Activated CD4-positive, alpha-beta memory T cell treated with anti-CD3 and anti-CD28 coated beads, Interleukin-2, amount 10 ng/mL, durations not matched to agents 7 days and 5 days (primary cell): ENCODE measurements at regions of chr17 and their contacts with region 1.

Region 1: DNA sequence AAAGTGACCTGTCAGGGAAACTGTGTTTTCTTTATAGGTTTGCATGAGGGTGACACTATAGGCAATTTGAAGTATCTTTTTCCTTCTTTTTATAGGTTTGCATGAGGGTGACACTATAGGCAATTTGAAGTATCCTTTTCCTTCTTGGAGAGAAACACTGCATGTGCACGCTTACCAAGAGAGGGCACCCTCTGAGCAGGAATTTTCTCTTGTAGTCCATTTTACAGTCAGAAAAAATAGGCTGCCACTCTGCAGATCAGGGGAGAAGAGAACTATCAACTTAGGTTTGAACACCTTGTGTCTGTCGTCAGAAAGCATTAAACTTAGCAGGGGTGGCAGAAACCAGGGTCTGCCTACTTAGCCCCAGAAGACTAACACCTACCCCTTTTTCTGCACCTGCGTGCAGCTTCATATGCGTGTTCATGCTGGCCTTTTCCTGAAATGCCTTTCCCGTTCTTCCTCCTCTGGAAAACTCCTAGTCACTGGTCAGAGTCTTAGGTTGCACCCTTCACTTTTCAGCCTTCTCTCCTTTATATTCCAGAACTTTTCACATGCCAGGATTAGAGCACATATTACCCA is 16.4 kb upstream of the SMIM36 start:
- DNase-seq: no peak
- H3K4me3 Mint-ChIP-seq: no peak overlapping the region
- H3K27ac Mint-ChIP-seq: no peak overlapping the region
- H3K4me1 Mint-ChIP-seq: peaks cover 15% of the 10 kb centered on the region
- H3K27me3 Mint-ChIP-seq: peaks cover 20% of the 10 kb centered on the region

Region 2: GRCh38 chr17:55157136-55157535 is 370.5 kb before region 1 on chr17:
- CTCF ChIA-PET with region 1: no interaction called
- POLR2A ChIA-PET with region 1: no interaction called
- DNase-seq: no peak
- H3K4me3 Mint-ChIP-seq: no peak overlapping the region
- H3K27ac Mint-ChIP-seq: no peak overlapping the region
- H3K4me1 Mint-ChIP-seq: peaks cover 4% of the 10 kb centered on the region
- H3K27me3 Mint-ChIP-seq: no peaks in the 10 kb centered on the region

Region 3: GRCh38 chr17:55190748-55191147 is 336.9 kb before region 1 on chr17:
- CTCF ChIA-PET with region 1: no interaction called
- POLR2A ChIA-PET with region 1: no interaction called
- DNase-seq: no peak
- H3K4me3 Mint-ChIP-seq: no peak overlapping the region
- H3K27ac Mint-ChIP-seq: no peak overlapping the region
- H3K4me1 Mint-ChIP-seq: no peaks in the 10 kb centered on the region
- H3K27me3 Mint-ChIP-seq: peaks cover 7% of the 10 kb centered on the region

Region 4: DNA sequence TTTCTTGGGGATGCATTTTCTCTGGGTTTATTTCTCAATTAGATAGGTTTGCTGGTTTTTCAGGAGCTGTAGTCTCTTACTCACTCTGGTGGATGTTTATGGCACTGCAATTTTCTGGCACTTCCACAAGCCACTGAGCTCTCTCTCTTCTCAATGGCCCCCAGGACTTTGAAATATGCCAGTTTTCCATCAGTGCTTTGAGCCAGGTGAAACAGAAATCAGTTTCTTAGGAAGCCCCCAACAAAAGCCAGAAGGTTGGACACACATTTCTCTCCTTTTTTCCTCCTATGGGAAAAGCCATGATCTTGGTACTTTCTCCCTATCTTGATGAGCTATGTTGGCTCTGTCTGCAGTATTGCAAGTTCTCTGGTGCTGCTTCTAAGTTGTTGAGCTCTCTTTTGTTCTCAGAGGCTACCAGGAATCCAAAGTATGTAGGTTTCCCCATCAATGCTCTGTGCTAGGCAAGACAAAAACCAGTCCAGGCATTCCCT is 74.3 kb after region 1 on chr17:
- CTCF ChIA-PET with region 1: interaction called, 40 read pairs
- POLR2A ChIA-PET with region 1: no interaction called
- DNase-seq: no peak
- H3K4me3 Mint-ChIP-seq: no peak overlapping the region
- H3K27ac Mint-ChIP-seq: no peak overlapping the region
- H3K4me1 Mint-ChIP-seq: no peaks in the 10 kb centered on the region
- H3K27me3 Mint-ChIP-seq: peaks cover 30% of the 10 kb centered on the region

Region 5: GRCh38 chr17:55641676-55642081 is 114.0 kb after region 1 on chr17:
- CTCF ChIA-PET with region 1: interaction called, 14 read pairs
- POLR2A ChIA-PET with region 1: interaction called, 3 read pairs
- DNase-seq: peak; percentile 41
- H3K4me3 Mint-ChIP-seq: no peak overlapping the region
- H3K27ac Mint-ChIP-seq: no peak overlapping the region
- H3K4me1 Mint-ChIP-seq: no peaks in the 10 kb centered on the region
- H3K27me3 Mint-ChIP-seq: peaks cover 19% of the 10 kb centered on the region

Region 6: DNA sequence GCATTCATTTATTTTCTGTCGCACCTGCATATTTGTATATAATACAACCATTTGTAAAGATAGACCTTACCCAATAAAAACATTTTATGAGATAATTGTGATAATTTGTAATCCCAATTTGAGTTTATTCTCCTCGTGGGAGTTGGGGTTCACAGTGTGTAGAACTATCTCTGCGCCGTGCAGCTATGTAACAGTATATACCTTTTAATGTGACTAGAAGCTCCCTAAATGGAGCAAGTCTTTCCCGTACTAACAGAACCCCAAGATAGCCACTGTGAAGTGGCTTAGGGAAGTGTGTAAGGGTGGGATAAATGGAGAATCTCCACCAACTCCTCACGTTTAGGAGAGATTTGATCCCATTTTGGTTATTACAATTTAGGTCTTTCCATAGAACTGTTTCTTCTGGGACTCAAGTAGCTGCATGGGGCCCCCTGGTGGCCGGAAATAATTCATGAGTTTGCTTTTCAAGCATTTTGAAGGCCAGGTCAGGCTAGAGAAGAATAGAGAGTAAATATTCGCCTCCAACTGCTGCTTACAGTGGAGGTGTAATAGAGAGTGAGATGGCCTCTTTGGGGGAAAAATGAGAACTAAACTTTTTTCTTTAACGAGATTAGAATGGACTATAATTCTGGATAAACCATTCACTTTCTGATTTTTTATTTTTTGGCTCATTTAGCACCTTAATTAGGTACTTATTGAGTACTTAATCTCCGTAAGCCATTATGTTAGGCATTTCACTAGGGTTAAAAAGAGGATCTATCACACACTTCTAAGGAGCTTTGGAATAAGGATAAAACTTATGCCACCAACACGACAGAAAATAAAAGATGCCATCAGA is 190.5 kb after region 1 on chr17:
- CTCF ChIA-PET with region 1: interaction called, 32 read pairs
- POLR2A ChIA-PET with region 1: interaction called, 3 read pairs
- DNase-seq: peak; percentile 65
- H3K4me3 Mint-ChIP-seq: no peak overlapping the region
- H3K27ac Mint-ChIP-seq: no peak overlapping the region
- H3K4me1 Mint-ChIP-seq: no peaks in the 10 kb centered on the region
- H3K27me3 Mint-ChIP-seq: peaks cover 17% of the 10 kb centered on the region

Region 7: GRCh38 chr17:55735731-55736405 is 208.2 kb after region 1 on chr17:
- CTCF ChIA-PET with region 1: interaction called, 14 read pairs
- POLR2A ChIA-PET with region 1: no interaction called
- DNase-seq: peak; percentile 32
- H3K4me3 Mint-ChIP-seq: no peak overlapping the region
- H3K27ac Mint-ChIP-seq: no peak overlapping the region
- H3K4me1 Mint-ChIP-seq: peaks cover 15% of the 10 kb centered on the region
- H3K27me3 Mint-ChIP-seq: peaks cover 31% of the 10 kb centered on the region

Region 8: GRCh38 chr17:55770148-55770870 is 242.7 kb after region 1 on chr17:
- CTCF ChIA-PET with region 1: interaction called, 14 read pairs
- POLR2A ChIA-PET with region 1: no interaction called
- DNase-seq: no peak
- H3K4me3 Mint-ChIP-seq: no peak overlapping the region
- H3K27ac Mint-ChIP-seq: no peak overlapping the region
- H3K4me1 Mint-ChIP-seq: no peaks in the 10 kb centered on the region
- H3K27me3 Mint-ChIP-seq: no peaks in the 10 kb centered on the region